Common myeloid progenitor, CD34-positive (primary cell): ENCODE measurements at regions of chr1 and their contacts with region 1.

Region 1: DNA sequence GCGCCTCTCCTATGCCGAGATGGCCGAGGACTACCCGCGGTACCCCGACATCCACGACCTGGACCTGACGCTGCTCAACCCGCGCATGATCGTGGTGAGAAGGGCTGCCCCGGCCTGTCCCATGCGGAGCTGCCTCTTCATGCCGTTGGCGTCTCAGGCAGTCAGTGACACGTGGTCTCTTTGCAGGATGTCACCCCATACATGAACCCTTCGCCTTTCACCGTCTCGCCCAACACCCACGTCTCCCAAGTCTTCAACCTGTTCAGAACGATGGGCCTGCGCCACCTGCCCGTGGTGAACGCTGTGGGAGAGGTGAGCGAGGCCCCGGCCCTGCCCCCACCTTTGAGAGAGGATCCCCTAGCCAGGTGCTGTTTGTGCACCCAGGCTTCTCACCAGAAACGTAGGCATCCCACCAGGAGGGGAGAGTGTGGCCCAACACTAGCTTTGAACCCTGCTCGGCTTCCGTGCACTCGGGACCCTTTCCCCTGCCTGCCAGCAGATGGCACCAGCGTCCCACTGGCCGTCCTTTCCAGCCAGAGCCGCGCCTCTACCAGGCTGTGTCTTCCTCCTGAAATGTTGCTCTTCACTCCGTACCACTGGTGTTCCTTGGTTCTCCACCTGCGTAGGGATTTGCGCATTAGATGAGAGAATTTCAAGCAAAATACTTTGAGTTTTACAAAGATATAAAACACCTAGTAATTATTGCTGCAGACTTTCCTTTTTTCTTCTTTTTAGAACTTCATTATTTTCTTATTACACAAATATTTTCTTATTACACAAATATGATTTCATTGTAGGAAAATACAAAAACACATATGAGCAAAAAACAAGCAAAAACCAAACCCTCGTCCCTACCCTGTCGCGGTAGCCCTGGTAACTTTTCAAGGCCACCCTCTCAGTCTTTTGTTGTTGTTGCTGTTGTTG is 9.0 kb downstream of the NPPA start:
- DNase-seq: peak; percentile 56 to 78 (median 70)
- H3K4me3 ChIP-seq: no peak overlapping the region
- H3K27ac ChIP-seq: no peak overlapping the region
- H3K4me1 ChIP-seq: peaks cover 8 to 37% (median 33%) of the 10 kb centered on the region in 4 experiments
- H3K27me3 ChIP-seq: no peaks in the 10 kb centered on the region

Region 2: GRCh38 chr1:11784993-11785769 is 53.4 kb before region 1 on chr1:
- CTCF ChIA-PET with region 1: no interaction called
- POLR2A ChIA-PET with region 1: no interaction called
- DNase-seq: peak in 2 of 3 donors; percentile 18 to 28
- H3K4me3 ChIP-seq: peak overlapping the region in 5 of 7 experiments; percentile 13 to 68 (median 61)
- H3K27ac ChIP-seq: no peak overlapping the region
- H3K4me1 ChIP-seq: peaks cover 0 to 10% (median 8%) of the 10 kb centered on the region in 4 experiments
- H3K27me3 ChIP-seq: no peaks in the 10 kb centered on the region

Region 3: GRCh38 chr1:11858968-11859871 is 20.6 kb after region 1 on chr1:
- CTCF ChIA-PET with region 1: interaction called, 13 read pairs
- POLR2A ChIA-PET with region 1: no interaction called
- DNase-seq: peak; percentile 81 to 91 (median 90)
- H3K4me3 ChIP-seq: no peak overlapping the region
- H3K27ac ChIP-seq: no peak overlapping the region
- H3K4me1 ChIP-seq: peaks cover 0 to 2% (median under 1%) of the 10 kb centered on the region in 4 experiments
- H3K27me3 ChIP-seq: peaks cover 3 to 49% (median 22%) of the 10 kb centered on the region in 5 experiments

Region 4: GRCh38 chr1:11925938-11926292 is 87.3 kb after region 1 on chr1:
- CTCF ChIA-PET with region 1: no interaction called
- POLR2A ChIA-PET with region 1: no interaction called
- DNase-seq: peak in 1 of 3 donors; percentile 20
- H3K4me3 ChIP-seq: peak overlapping the region; percentile 46 to 79 (median 68)
- H3K27ac ChIP-seq: no peak overlapping the region
- H3K4me1 ChIP-seq: peaks cover 11 to 32% (median 28%) of the 10 kb centered on the region in 4 experiments
- H3K27me3 ChIP-seq: no peaks in the 10 kb centered on the region